Posterior vena cava (tissue), 2 donors: ENCODE measurements at regions of chr16 and their contacts with region 1.

Region 1: GRCh38 chr16:27495191-27495590 is 54.5 kb downstream of the GTF3C1 start:
- DNase-seq: peak; percentile 91

Region 2: GRCh38 chr16:27505297-27506236 is 10.4 kb after region 1 on chr16:
- intact Hi-C with region 1: loop called in 1 of 2 experiments (anchors 1 kb)
- DNase-seq: no peak

Region 3: GRCh38 chr16:27561216-27561615 is 66.0 kb after region 1 on chr16:
- intact Hi-C with region 1: no loop called
- DNase-seq: no peak